B cell (primary cell): ENCODE measurements at regions of chr1 and their contacts with region 1.

Region 1: GRCh38 chr1:28088168-28088961 is at the start of gene EYA3:
- DNase-seq: peak; percentile 99
- ATAC-seq: peak; percentile 93
- H3K4me3 ChIP-seq: peak within 1 kb of the TSS; percentile 79 to 97 (median 82)
- H3K4me3 Mint-ChIP-seq: peak within 1 kb of the TSS; percentile 94
- H3K27ac ChIP-seq: peak within 1 kb of the TSS; percentile 83 to 91
- H3K27ac Mint-ChIP-seq: peak within 1 kb of the TSS; percentile 96
- H3K4me1 ChIP-seq: peaks cover 11 to 24% of the 10 kb centered on the region in 2 donors
- H3K4me1 Mint-ChIP-seq: peaks cover 43% of the 10 kb centered on the region
- H3K27me3 ChIP-seq: no peaks in the 10 kb centered on the region
- H3K27me3 Mint-ChIP-seq: no peaks in the 10 kb centered on the region
- CTCF ChIP-seq: no peak
- total RNA-seq, gene EYA3: 31.3 and 31.7 TPM in 2 replicates

Region 2: DNA sequence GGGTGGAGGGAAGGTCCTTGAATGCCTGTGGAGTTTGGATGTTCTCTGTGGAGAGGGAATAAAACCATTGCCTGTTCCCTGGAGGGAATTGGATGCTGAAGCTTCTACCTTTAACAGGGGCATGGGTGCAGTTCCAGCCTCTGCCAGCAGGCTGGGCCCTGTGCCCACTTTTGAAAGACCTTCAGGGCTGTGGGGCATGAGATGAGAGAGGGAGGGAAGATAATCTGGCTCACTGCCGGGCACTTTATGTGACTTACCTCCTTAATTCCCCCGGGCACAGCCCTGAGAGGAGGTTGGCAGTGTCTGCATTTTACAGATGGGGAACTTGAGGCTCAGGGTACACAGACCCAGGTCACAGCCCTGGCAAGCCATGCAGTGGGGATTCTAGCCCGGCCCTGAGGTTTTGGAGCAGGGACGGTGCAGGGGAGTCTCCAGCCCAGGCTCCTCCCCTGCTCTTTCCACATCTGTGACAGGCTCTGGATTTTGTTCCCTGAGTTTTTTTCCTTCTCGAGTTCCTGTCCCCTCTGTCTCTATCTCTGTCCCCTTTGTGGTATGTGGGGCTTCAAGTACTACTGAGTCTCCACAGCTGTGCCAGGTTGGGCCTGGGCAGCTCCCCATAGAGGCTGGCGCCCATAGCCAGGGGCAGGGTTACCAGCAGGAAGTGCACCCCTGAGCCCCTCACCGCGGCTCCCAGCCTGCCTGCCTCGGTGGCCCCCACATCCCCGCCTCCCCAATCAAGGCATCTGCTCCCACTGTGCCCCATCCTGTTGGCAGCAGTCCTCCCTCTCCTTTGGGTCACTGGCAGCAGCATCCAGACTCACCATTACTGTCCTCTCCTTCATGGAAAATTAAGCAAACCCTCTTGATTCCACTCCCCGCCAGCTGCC is 230.1 kb before region 1 on chr1:
- CTCF ChIA-PET with region 1: interaction called, 7 read pairs
- POLR2A ChIA-PET with region 1: no interaction called
- intact Hi-C with region 1: loop called (anchors 1 kb)
- DNase-seq: peak; percentile 88
- ATAC-seq: peak; percentile 95
- H3K4me3 ChIP-seq: no peak overlapping the region
- H3K4me3 Mint-ChIP-seq: no peak overlapping the region
- H3K27ac ChIP-seq: no peak overlapping the region
- H3K27ac Mint-ChIP-seq: peak overlapping the region; percentile 79
- H3K4me1 ChIP-seq: peaks cover 20 to 22% of the 10 kb centered on the region in 2 donors
- H3K4me1 Mint-ChIP-seq: peaks cover 27% of the 10 kb centered on the region
- H3K27me3 ChIP-seq: peaks cover 0 to 3% (median 0%) of the 10 kb centered on the region in 4 experiments
- H3K27me3 Mint-ChIP-seq: no peaks in the 10 kb centered on the region
- CTCF ChIP-seq: peak; percentile 97

Region 3: DNA sequence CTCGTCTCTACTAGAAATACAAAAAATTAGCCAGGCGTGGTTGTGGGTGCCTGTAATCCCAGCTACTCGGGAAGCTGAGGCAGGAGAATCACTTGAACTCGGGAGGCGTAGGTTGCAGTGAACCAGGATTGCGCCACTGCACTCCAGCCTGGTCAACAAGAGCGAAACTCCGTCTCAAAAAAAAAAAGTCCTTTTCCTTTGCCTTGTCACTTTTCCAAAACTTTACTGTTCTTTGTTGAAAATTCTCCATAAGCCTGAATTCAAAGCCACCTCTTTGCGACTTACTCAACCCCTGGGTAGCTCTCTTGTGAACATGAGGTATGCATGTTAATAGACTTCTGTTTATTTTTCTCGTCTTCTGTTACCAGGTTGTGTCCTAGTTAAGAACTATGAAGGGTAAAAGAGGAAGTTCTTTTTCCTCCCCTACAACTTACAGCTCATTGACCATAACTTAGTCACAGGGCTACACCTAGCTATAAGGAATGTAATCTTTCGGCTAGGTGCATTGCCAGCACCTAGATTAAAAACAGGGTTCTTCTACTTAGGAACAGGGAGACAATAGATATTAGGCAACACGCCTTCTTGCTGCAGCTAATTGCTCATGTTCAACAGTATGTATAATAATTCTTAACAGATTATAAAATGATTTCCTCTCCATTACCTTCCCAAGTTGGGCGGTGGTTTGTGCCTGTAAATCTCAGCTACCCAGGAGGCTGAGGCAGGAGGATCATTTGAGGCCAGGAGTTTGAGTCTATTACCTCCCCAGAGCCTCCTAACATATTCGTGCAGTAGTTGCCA is 47.2 kb after region 1 on chr1:
- CTCF ChIA-PET with region 1: interaction called, 23 read pairs
- POLR2A ChIA-PET with region 1: no interaction called
- intact Hi-C with region 1: no loop called
- DNase-seq: peak; percentile 74
- ATAC-seq: peak; percentile 90
- H3K4me3 ChIP-seq: peak overlapping the region in 1 of 5 experiments; percentile 21
- H3K4me3 Mint-ChIP-seq: peak overlapping the region; percentile 54
- H3K27ac ChIP-seq: peak overlapping the region; percentile 1 to 42
- H3K27ac Mint-ChIP-seq: peak overlapping the region; percentile 13
- H3K4me1 ChIP-seq: peaks cover 35 to 61% of the 10 kb centered on the region in 2 donors
- H3K4me1 Mint-ChIP-seq: peaks cover 62% of the 10 kb centered on the region
- H3K27me3 ChIP-seq: no peaks in the 10 kb centered on the region
- H3K27me3 Mint-ChIP-seq: no peaks in the 10 kb centered on the region
- CTCF ChIP-seq: no peak

Region 4: GRCh38 chr1:28185071-28185470 is 96.7 kb after region 1 on chr1:
- CTCF ChIA-PET with region 1: interaction called, 40 read pairs
- POLR2A ChIA-PET with region 1: no interaction called
- intact Hi-C with region 1: no loop called
- DNase-seq: no peak
- ATAC-seq: no peak
- H3K4me3 ChIP-seq: no peak overlapping the region
- H3K4me3 Mint-ChIP-seq: no peak overlapping the region
- H3K27ac ChIP-seq: no peak overlapping the region
- H3K27ac Mint-ChIP-seq: no peak overlapping the region
- H3K4me1 ChIP-seq: peaks cover 15 to 18% of the 10 kb centered on the region in 2 donors
- H3K4me1 Mint-ChIP-seq: peaks cover 25% of the 10 kb centered on the region
- H3K27me3 ChIP-seq: no peaks in the 10 kb centered on the region
- H3K27me3 Mint-ChIP-seq: no peaks in the 10 kb centered on the region
- CTCF ChIP-seq: no peak

Region 5: DNA sequence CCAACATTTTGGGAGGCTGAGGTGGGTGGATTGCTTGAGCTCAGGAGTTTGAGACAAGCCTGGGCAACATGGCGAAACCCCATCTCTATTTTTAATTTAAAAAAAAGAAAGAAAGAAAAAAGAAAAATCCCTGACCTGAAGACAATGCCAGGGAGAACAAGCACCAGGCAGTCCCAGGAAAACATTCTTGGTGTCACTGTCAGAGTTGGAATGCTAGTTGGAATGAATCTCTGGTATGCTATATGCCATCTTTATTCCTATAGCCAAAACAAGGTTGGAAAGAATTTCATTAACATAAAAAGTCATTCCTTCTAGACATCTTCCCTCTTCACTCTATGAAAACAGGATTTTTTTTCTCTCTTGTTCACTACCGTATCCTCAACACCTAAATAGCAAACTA is 141.6 kb after region 1 on chr1:
- CTCF ChIA-PET with region 1: interaction called, 7 read pairs
- POLR2A ChIA-PET with region 1: interaction called, 10 read pairs
- intact Hi-C with region 1: no loop called
- DNase-seq: no peak
- ATAC-seq: no peak
- H3K4me3 ChIP-seq: no peak overlapping the region
- H3K4me3 Mint-ChIP-seq: no peak overlapping the region
- H3K27ac ChIP-seq: no peak overlapping the region
- H3K27ac Mint-ChIP-seq: no peak overlapping the region
- H3K4me1 ChIP-seq: peaks cover 5 to 19% of the 10 kb centered on the region in 2 donors
- H3K4me1 Mint-ChIP-seq: peaks cover 25% of the 10 kb centered on the region
- H3K27me3 ChIP-seq: no peaks in the 10 kb centered on the region
- H3K27me3 Mint-ChIP-seq: no peaks in the 10 kb centered on the region
- CTCF ChIP-seq: no peak

Region 6: DNA sequence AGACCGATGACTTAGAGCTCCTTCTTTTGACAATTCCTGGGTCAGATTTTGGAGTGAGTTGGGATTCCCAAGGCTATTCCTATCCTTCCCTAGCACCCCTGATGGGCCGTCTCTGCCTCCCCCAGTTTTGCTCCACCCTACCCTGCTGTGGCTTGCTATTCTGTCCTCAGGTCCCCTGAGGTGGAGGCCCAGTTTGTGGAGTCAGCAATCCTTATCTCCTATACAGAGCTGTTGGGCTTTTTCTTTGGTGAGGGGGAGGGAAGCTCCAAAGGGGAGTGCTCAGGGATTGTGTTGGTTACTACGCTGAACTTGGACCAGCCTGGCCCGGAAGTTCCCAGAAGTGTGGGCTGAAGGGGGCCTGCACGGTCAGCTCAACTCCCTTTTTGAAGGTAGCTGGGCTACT is 178.6 kb after region 1 on chr1:
- CTCF ChIA-PET with region 1: no interaction called
- POLR2A ChIA-PET with region 1: no interaction called
- intact Hi-C with region 1: no loop called
- DNase-seq: no peak
- ATAC-seq: no peak
- H3K4me3 ChIP-seq: no peak overlapping the region
- H3K4me3 Mint-ChIP-seq: no peak overlapping the region
- H3K27ac ChIP-seq: no peak overlapping the region
- H3K27ac Mint-ChIP-seq: no peak overlapping the region
- H3K4me1 ChIP-seq: no peaks in the 10 kb centered on the region
- H3K4me1 Mint-ChIP-seq: no peaks in the 10 kb centered on the region
- H3K27me3 ChIP-seq: no peaks in the 10 kb centered on the region
- H3K27me3 Mint-ChIP-seq: no peaks in the 10 kb centered on the region
- CTCF ChIP-seq: no peak